ENCODE measurements at regions of chr4 and their contacts with region 1.

Region 1: GRCh38 chr4:83284193-83285054 is at the start of gene COQ2:
- DNase-seq: peak; percentile 97
- ATAC-seq: peak; percentile 92
- H3K4me3 Mint-ChIP-seq: peak within 1 kb of the TSS; percentile 91
- H3K27ac Mint-ChIP-seq: peak within 1 kb of the TSS; percentile 96
- H3K4me1 Mint-ChIP-seq: peaks cover 29% of the 10 kb centered on the region
- H3K27me3 Mint-ChIP-seq: no peaks in the 10 kb centered on the region
- total RNA-seq, gene COQ2: 18.2 to 20.1 TPM

Region 2: DNA sequence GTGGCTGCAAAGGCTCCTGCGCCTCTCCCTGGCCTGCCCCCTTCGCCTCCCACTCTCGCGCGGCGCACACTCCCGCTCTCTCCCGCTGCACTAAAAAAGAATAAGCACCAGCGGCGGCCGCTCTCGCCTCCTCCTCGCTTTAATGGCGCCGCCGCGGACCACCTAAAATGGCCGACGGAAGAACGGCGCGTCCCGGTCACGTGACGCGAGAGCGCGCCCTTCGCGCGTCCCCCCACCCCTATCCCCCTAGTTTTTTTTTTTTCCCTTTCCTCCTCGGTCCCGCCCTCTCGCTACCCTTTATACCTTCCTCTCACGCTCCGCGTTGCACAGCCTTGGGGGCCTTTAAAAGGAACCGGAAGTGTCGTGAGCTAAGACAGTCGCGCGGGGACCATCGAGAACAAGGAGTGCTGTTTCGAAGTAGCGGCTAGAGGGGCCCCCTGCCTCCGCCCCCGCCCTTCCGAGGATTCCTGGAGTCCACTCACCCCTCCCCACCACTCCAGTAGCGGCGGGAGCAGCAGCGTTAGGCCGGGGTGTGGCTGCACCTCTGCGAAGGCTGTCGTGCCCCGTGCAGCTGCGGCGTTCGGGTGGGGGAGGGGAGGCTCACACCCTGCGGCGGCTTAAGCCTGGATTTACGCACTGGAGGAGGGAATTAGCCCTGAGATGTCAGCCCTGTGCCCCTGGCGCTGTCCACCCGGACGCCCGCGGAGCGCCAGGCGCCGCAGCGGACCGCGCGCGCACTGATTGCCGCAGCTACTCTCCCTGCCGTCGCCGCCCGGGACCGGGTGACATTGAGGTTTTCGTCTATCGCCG is 910.4 kb before region 1 on chr4 and contains the start of gene HNRNPD:
- CTCF ChIA-PET with region 1: no interaction called
- POLR2A ChIA-PET with region 1: no interaction called
- intact Hi-C with region 1: loop called (anchors 2 to 10 kb)
- DNase-seq: peak; percentile 97
- ATAC-seq: peak; percentile 90
- H3K4me3 Mint-ChIP-seq: peak within 1 kb of the TSS; percentile 89
- H3K27ac Mint-ChIP-seq: peak within 1 kb of the TSS; percentile 99
- H3K4me1 Mint-ChIP-seq: peaks cover 34% of the 10 kb centered on the region
- H3K27me3 Mint-ChIP-seq: no peaks in the 10 kb centered on the region
- total RNA-seq, gene HNRNPD: 505 to 510 TPM

Region 3: DNA sequence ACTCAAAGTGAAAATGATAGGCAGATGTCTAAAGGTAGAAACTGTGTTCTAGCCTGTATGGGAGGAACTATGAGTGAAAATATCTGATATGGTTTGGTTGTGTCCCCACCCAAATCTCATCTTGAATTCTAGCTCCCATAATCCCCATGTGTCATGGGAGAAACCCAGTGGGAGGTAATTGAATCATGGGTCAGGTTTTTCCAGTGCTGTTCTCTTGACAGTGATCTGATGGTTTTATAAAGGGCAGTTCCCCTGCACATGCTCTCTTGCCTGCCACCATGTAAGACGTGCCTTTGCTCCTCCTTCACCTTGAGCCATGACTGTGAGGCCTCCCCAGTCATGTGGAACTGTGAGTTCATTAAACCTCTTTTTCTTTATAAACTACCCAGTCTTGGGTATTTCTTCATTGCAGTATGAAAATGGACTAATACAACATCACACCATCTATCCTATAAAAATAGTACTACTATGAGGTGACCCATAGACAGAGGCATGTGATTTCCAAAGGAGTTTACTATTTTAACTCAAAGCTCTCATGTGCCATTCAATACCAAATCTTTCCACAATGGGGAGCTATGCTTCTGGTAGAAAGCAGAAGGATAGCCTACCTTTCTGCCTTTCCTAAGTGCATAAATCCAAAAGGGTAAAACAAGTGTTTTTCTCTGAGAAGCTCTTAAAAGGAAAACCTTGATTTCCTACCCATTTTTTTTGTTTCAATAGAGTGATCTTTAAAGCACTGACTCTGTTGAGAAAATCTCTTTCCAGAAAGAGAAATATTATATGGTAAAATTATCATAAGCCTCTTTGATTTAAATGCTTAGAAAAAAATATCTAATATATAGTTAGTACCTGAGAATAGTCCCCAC is 432.3 kb before region 1 on chr4:
- CTCF ChIA-PET with region 1: interaction called, 20 read pairs
- POLR2A ChIA-PET with region 1: no interaction called
- intact Hi-C with region 1: loop called (anchors 1 to 5 kb)
- DNase-seq: no peak
- ATAC-seq: peak; percentile 65
- H3K4me3 Mint-ChIP-seq: no peak overlapping the region
- H3K27ac Mint-ChIP-seq: peak overlapping the region; percentile 73
- H3K4me1 Mint-ChIP-seq: peaks cover 3% of the 10 kb centered on the region
- H3K27me3 Mint-ChIP-seq: no peaks in the 10 kb centered on the region

Region 4: GRCh38 chr4:83012687-83013419 is 271.6 kb before region 1 on chr4:
- CTCF ChIA-PET with region 1: interaction called, 3 read pairs
- POLR2A ChIA-PET with region 1: no interaction called
- intact Hi-C with region 1: loop called (anchors 1 kb)
- DNase-seq: peak; percentile 99
- ATAC-seq: peak; percentile 88
- H3K4me3 Mint-ChIP-seq: peak overlapping the region; percentile 99
- H3K27ac Mint-ChIP-seq: peak overlapping the region; percentile 93
- H3K4me1 Mint-ChIP-seq: peaks cover 31% of the 10 kb centered on the region
- H3K27me3 Mint-ChIP-seq: no peaks in the 10 kb centered on the region

Region 5: GRCh38 chr4:83074086-83074704 is 210.2 kb before region 1 on chr4:
- CTCF ChIA-PET with region 1: interaction called, 23 read pairs
- POLR2A ChIA-PET with region 1: interaction called, 4 read pairs
- intact Hi-C with region 1: loop called (anchors 1 kb)
- DNase-seq: peak; percentile 63
- ATAC-seq: peak; percentile 91
- H3K4me3 Mint-ChIP-seq: peak overlapping the region; percentile 25
- H3K27ac Mint-ChIP-seq: no peak overlapping the region
- H3K4me1 Mint-ChIP-seq: peaks cover 13% of the 10 kb centered on the region
- H3K27me3 Mint-ChIP-seq: no peaks in the 10 kb centered on the region

Region 6: GRCh38 chr4:83259586-83259985 is 24.8 kb before region 1 on chr4:
- CTCF ChIA-PET with region 1: interaction called, 19 read pairs
- POLR2A ChIA-PET with region 1: interaction called, 3 read pairs
- intact Hi-C with region 1: no loop called
- DNase-seq: no peak
- ATAC-seq: no peak
- H3K4me3 Mint-ChIP-seq: no peak overlapping the region
- H3K27ac Mint-ChIP-seq: no peak overlapping the region
- H3K4me1 Mint-ChIP-seq: no peaks in the 10 kb centered on the region
- H3K27me3 Mint-ChIP-seq: no peaks in the 10 kb centered on the region

Region 7: DNA sequence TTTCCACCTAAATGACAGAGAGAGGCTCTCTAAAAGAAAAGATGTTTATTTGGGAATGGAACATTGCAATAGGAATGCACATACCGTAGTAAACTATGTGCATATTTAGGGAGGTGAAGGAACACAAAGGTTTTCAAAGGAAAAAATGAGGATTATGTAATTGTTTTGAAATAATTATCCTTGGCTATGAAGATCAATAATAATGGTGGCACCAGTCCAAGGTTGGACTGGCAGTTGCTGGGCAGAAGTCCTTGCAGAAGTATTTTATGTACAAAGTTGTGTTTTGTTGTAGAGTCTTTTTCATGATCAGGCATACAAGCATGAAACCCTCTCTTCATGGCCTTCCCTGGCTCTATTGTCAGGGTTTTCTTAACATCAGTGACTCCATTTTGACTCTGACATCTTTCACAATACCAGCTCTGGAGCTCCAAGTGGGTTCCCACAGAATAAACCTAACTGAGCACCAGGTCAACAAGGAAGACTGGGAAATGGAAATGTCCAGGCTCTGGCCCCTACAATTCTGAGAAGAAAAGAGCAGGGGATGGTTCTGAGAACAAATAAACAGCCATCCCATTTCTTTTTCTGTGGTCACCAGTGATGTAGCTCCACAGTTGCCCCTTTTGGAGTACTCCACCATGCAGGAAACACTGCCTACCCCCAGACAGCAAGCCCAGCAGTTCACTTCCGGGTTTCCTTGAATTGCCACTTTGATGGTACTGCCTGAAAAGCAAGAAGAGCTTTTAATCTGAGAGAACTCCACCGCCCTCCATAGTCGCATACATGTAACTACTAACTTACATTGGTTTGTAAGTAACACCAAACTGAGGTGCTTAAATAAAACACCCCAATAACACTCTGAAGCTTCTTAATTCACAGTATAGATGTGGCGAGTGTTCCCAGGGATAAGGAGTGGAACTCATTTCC is 103.6 kb after region 1 on chr4:
- CTCF ChIA-PET with region 1: interaction called, 3 read pairs
- POLR2A ChIA-PET with region 1: no interaction called
- intact Hi-C with region 1: loop called (anchors 1 to 5 kb)
- DNase-seq: peak; percentile 38
- ATAC-seq: peak; percentile 64
- H3K4me3 Mint-ChIP-seq: no peak overlapping the region
- H3K27ac Mint-ChIP-seq: peak overlapping the region; percentile 11
- H3K4me1 Mint-ChIP-seq: peaks cover 6% of the 10 kb centered on the region
- H3K27me3 Mint-ChIP-seq: no peaks in the 10 kb centered on the region

Measured in activated CD4-positive, alpha-beta T cell treated with anti-CD3 and anti-CD28 coated beads for 36 hours (primary cell).